Caco-2 (cell line): ENCODE measurements at regions of chr4 and their contacts with region 1.

Region 1: GRCh38 chr4:57037982-57038604 is 59.4 kb downstream of the POLR2B start:
- DNase-seq: peak; percentile 69 to 84
- H3K4me3 ChIP-seq: no peak overlapping the region
- H3K4me3 Mint-ChIP-seq: no peak overlapping the region
- H3K27ac Mint-ChIP-seq: no peak overlapping the region
- H3K4me1 ChIP-seq: no peaks in the 10 kb centered on the region; the same call in 1 of the 2 replicates
- H3K4me1 Mint-ChIP-seq: peaks cover 13% of the 10 kb centered on the region
- H3K27me3 ChIP-seq: no peaks in the 10 kb centered on the region
- H3K27me3 Mint-ChIP-seq: no peaks in the 10 kb centered on the region
- CTCF ChIP-seq: peak; percentile 91 to 97

Region 2: DNA sequence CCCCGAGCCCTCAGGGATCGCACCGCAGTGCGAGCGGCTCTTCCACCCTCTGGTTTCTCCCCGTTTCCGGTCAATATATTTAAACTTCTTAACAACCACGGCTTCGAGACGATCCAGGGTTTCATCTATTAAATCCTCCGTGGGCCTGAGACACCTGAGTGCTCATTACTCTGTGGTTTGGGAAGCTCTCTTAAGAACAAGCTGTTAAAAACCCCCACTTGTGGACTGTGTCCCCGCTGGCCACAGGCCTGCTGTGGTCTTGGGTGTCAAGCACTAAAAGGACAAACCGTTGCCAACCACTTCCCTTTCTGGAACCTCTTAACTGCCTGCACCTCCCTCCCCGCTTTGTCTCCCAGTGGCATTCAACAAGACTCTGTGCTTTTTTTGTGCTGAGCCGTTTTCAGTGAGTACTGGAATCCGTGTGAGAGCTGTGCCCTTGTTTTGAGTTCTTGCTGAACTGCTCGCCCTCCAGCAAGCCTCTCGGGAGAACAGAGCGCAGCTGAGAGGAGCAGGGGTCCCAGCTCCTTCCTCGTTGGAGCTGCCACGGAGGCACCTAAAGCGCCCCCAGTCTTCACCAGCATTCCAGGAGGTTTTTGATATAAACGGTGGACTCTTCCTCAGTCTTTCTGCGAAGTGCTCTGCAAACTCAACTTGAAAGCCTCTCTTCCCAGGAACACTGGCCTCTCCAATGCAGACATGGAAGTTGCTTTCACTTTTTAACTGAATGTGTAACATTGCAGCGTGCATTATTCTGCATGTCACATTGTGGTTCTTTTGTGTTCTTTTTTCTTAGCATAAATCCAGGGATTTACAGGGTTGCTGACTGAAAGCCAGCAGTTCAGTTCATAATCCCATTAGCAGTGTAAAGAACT is 72.8 kb after region 1 on chr4:
- CTCF ChIA-PET with region 1: interaction called, 5 read pairs
- POLR2A ChIA-PET with region 1: interaction called, 3 read pairs
- intact Hi-C with region 1: loop called (anchors 1 kb)
- DNase-seq: no peak
- H3K4me3 ChIP-seq: peak overlapping the region; percentile 64
- H3K4me3 Mint-ChIP-seq: peak overlapping the region; percentile 80
- H3K27ac Mint-ChIP-seq: peak overlapping the region; percentile 87
- H3K4me1 ChIP-seq: 0 out of 2 replicates have a peak, but pooled peaks cover 3% of the 10 kb centered on the region
- H3K4me1 Mint-ChIP-seq: peaks cover 31% of the 10 kb centered on the region
- H3K27me3 ChIP-seq: no peaks in the 10 kb centered on the region
- H3K27me3 Mint-ChIP-seq: no peaks in the 10 kb centered on the region
- CTCF ChIP-seq: no peak

Region 3: DNA sequence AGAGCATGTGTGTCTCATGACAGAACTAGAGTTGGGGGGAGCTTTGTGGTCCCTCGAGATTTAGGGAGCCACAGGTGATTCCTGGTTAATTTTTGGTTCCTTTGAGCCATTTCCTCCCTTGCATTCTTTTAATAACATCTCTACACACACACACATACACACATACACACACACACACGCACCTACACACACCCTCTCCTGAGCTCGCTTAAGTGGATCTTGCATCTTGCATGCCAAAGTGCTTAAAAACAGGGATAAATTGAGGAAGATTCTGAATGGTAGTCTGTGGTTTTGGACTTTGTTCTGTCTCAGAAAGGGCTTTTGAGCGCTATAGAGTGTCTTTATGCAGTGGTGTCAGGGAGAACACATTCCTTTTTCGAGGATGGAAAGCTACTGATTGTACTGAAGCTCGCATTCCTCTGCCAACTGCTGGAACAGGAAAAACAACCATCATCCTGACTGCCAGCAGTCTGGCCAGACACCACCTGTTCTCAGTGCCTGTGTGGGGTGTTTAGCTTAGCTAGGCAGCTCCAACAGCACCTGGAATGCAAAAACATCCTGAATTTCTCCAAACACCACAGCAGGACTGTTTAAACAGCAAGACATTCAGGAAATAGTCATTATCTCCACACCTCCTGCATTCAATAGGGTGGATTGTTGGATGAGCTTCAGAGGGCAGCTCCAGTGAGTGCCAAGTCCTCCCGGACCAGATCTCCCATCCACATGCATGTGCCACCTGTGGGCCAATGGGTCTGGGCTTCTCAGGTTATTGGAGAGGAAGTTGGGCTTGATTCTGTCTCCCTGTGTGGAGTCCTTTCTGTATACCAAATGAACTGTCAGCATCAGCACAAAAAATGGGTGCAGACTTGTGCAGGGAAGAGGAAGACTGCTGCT is 94.0 kb after region 1 on chr4:
- CTCF ChIA-PET with region 1: interaction called, 5 read pairs
- POLR2A ChIA-PET with region 1: no interaction called
- intact Hi-C with region 1: loop called (anchors 1 kb)
- DNase-seq: peak; percentile 60 to 62
- H3K4me3 ChIP-seq: no peak overlapping the region
- H3K4me3 Mint-ChIP-seq: peak overlapping the region; percentile 9
- H3K27ac Mint-ChIP-seq: peak overlapping the region; percentile 75
- H3K4me1 ChIP-seq: peaks cover 14% of the 10 kb centered on the region
- H3K4me1 Mint-ChIP-seq: peaks cover 17% of the 10 kb centered on the region
- H3K27me3 ChIP-seq: no peaks in the 10 kb centered on the region
- H3K27me3 Mint-ChIP-seq: no peaks in the 10 kb centered on the region
- CTCF ChIP-seq: no peak

Region 4: GRCh38 chr4:57158221-57158620 is 120.1 kb after region 1 on chr4:
- CTCF ChIA-PET with region 1: interaction called, 20 read pairs
- POLR2A ChIA-PET with region 1: no interaction called
- intact Hi-C with region 1: loop called (anchors 1 kb)
- DNase-seq: peak in 1 of 2 experiments; percentile 32
- H3K4me3 ChIP-seq: no peak overlapping the region
- H3K4me3 Mint-ChIP-seq: no peak overlapping the region
- H3K27ac Mint-ChIP-seq: no peak overlapping the region
- H3K4me1 ChIP-seq: peaks cover 4% of the 10 kb centered on the region
- H3K4me1 Mint-ChIP-seq: peaks cover 6% of the 10 kb centered on the region
- H3K27me3 ChIP-seq: no peaks in the 10 kb centered on the region
- H3K27me3 Mint-ChIP-seq: no peaks in the 10 kb centered on the region
- CTCF ChIP-seq: peak in 1 of 2 experiments; percentile 35